Transverse colon (tissue), 4 donors: ENCODE measurements at regions of chr1 and their contacts with region 1.

Region 1: GRCh38 chr1:207404849-207405525 is 49.1 kb upstream of the CR2 start:
- DNase-seq: no peak
- H3K4me3 ChIP-seq: no peak overlapping the region
- H3K27ac ChIP-seq: no peak overlapping the region
- H3K4me1 ChIP-seq: no peaks in the 10 kb centered on the region
- H3K27me3 ChIP-seq: no peaks in the 10 kb centered on the region
- CTCF ChIP-seq: peak; percentile 68 to 82 (median 74)
- EP300 ChIP-seq: no peak
- POLR2A ChIP-seq: no peak

Region 2: DNA sequence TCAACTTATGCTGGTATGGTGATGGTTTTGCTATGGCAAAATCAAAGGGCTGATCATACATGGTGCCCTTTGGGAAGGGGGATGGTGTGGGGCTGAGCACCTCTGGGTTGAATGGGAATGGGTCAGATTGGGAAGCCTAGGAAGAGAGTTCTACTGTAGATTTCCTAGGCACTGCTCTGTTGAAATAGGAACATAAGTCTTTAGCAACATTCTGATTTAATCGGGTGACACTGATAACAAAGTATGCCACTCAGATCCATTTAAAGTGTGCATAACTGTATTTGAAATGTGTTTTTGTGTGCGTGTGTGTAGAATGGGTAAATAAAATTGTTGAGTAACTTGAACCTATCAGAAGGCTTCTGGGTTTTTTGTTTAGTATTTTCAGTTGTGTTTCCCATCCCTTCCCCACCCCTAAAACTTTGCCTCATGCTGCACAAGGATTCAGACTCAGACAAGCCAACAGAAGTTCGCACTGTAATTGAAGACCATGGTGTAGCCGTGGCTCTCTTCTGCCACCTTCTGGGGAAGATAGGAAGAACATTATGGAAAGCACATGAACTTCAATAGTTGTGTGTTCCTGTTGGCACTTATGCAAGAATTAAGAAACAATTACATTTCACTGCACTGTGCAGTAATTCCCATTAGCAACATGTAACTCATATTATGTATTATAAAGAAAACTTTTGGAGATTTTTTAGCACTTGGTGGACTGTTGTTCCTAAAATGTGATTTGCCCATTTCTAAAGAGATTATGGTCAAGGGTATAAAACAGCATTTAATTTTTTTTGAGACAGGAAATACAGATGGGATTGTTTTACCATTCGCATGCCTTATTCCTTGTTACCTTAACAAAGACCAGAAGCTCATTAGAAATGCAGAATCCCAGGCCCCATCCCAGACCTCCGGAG is 327.3 kb before region 1 on chr1:
- in situ Hi-C with region 1: loop called in 2 of 4 experiments (anchors 10 kb)
- intact Hi-C with region 1: loop called (anchors 10 kb)
- DNase-seq: peak; percentile 74
- H3K4me3 ChIP-seq: no peak overlapping the region
- H3K27ac ChIP-seq: peak overlapping the region in 2 of 4 donors; percentile 42 to 46
- H3K4me1 ChIP-seq: peaks cover 0 to 15% (median 0%) of the 10 kb centered on the region in 4 donors
- H3K27me3 ChIP-seq: no peaks in the 10 kb centered on the region
- CTCF ChIP-seq: peak; percentile 86 to 93 (median 88)
- EP300 ChIP-seq: no peak
- POLR2A ChIP-seq: no peak

Region 3: GRCh38 chr1:207084701-207085180 is 320.2 kb before region 1 on chr1:
- in situ Hi-C with region 1: loop called (anchors 5 to 10 kb)
- intact Hi-C with region 1: loop called (anchors 10 kb)
- DNase-seq: peak; percentile 58
- H3K4me3 ChIP-seq: no peak overlapping the region
- H3K27ac ChIP-seq: no peak overlapping the region
- H3K4me1 ChIP-seq: peaks cover 0 to 14% (median 12%) of the 10 kb centered on the region in 4 donors
- H3K27me3 ChIP-seq: no peaks in the 10 kb centered on the region
- CTCF ChIP-seq: peak; percentile 56 to 84 (median 60)
- EP300 ChIP-seq: no peak
- POLR2A ChIP-seq: no peak

Region 4: DNA sequence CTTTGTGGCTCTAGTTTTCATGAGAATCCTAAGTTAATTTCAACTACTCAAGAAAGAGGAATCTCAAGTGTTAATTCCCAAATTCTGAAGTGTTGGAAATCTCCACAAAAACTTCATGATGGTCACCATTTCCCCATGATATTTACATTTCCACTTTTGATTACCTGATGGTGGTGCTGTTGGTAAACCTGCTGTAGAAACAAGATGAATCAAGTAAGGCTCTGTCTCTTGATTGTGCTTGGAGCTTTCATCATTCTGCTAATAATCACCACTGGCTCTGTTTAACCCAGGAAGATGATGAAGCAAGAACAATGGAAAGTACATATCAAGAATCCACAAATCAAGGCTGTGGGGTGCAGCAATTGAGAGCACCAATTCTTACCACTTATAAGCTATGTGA is 223.1 kb before region 1 on chr1:
- in situ Hi-C with region 1: loop called in 1 of 4 experiments (anchors 25 kb)
- intact Hi-C with region 1: no loop called
- DNase-seq: no peak
- H3K4me3 ChIP-seq: no peak overlapping the region
- H3K27ac ChIP-seq: no peak overlapping the region
- H3K4me1 ChIP-seq: no peaks in the 10 kb centered on the region
- H3K27me3 ChIP-seq: no peaks in the 10 kb centered on the region
- CTCF ChIP-seq: no peak
- EP300 ChIP-seq: no peak
- POLR2A ChIP-seq: no peak

Region 5: DNA sequence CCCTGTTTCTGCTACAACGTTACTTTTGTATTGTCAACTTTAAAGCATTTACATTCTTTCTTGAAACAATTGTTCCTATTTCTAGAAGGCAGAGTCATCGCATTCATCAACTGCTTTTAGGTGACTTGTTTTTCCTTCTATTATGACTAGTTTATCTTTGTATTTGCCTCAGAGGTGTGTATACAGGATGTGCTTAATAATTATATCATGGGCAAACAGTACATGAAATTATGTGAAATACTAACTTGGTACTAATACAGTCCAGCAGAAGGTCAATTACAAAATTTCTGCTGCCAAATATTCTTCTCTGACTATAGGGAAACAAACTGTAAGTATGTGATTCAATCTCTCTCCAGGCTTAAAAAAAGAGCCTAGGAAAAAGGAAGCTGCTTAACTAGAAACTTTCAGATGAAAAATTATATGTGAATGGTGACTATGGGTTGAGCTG is 199.3 kb before region 1 on chr1:
- in situ Hi-C with region 1: no loop called
- intact Hi-C with region 1: no loop called
- DNase-seq: no peak
- H3K4me3 ChIP-seq: no peak overlapping the region
- H3K27ac ChIP-seq: peak overlapping the region; percentile 7 to 62 (median 46)
- H3K4me1 ChIP-seq: no peaks in the 10 kb centered on the region
- H3K27me3 ChIP-seq: no peaks in the 10 kb centered on the region
- CTCF ChIP-seq: no peak
- EP300 ChIP-seq: no peak
- POLR2A ChIP-seq: no peak

Region 6: GRCh38 chr1:207259391-207259790 is 145.6 kb before region 1 on chr1:
- in situ Hi-C with region 1: loop called in 1 of 4 experiments (anchors 10 kb)
- intact Hi-C with region 1: no loop called
- DNase-seq: peak; percentile 12
- H3K4me3 ChIP-seq: no peak overlapping the region
- H3K27ac ChIP-seq: no peak overlapping the region
- H3K4me1 ChIP-seq: no peaks in the 10 kb centered on the region
- H3K27me3 ChIP-seq: no peaks in the 10 kb centered on the region
- CTCF ChIP-seq: peak; percentile 35 to 73 (median 55)
- EP300 ChIP-seq: no peak
- POLR2A ChIP-seq: no peak